OCI-LY7 (cell line): ENCODE measurements at regions of chr15 and their contacts with region 1.

Region 1: GRCh38 chr15:41180206-41180789 is 50.3 kb downstream of the EXD1 start:
- DNase-seq: no peak
- H3K4me3 ChIP-seq: no peak overlapping the region
- H3K27ac ChIP-seq: no peak overlapping the region
- H3K4me1 ChIP-seq: no peaks in the 10 kb centered on the region
- CTCF ChIP-seq: no peak

Region 2: GRCh38 chr15:41022487-41023090 is 157.7 kb before region 1 on chr15:
- CTCF ChIA-PET with region 1: no interaction called
- POLR2A ChIA-PET with region 1: no interaction called
- intact Hi-C with region 1: loop called (anchors 2 kb)
- DNase-seq: peak; percentile 55
- H3K4me3 ChIP-seq: no peak overlapping the region
- H3K27ac ChIP-seq: no peak overlapping the region
- H3K4me1 ChIP-seq: no peaks in the 10 kb centered on the region
- CTCF ChIP-seq: peak; percentile 82

Region 3: GRCh38 chr15:41215708-41216107 is 35.4 kb after region 1 on chr15:
- CTCF ChIA-PET with region 1: no interaction called
- POLR2A ChIA-PET with region 1: no interaction called
- intact Hi-C with region 1: no loop called
- DNase-seq: no peak
- H3K4me3 ChIP-seq: no peak overlapping the region
- H3K27ac ChIP-seq: no peak overlapping the region
- H3K4me1 ChIP-seq: no peaks in the 10 kb centered on the region
- CTCF ChIP-seq: no peak